ENCODE measurements at regions of chr20 and their contacts with region 1.

Region 1: DNA sequence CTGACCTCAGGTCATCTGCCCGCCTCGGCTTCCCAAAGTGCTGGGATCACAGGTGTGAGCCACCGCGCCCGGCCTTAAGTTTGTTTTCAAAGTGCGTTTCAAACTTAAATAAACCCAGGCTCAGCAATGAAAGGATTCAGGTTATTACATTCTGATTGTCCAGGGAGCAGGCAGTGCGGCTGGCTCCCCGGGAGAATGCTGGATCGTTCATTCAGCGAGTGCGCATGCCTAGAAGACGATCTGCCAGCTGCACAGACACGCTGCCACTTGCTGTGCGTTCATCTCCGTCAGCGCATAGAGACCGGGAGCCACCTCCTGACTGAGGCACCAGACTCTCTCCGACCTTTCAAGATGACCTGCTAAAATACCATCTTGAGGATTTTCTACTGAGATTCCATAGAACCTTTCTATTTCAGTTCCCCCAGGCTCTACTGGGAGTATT is 163.9 kb upstream of the ZNF217 start:
- DNase-seq: peak in 1 of 2 experiments; percentile 10
- H3K4me3 ChIP-seq: no peak overlapping the region
- H3K27ac ChIP-seq: no peak overlapping the region
- H3K4me1 ChIP-seq: peaks cover 22% of the 10 kb centered on the region
- H3K27me3 ChIP-seq: no peaks in the 10 kb centered on the region
- CTCF ChIP-seq: no peak

Region 2: GRCh38 chr20:53328961-53329360 is 428.5 kb before region 1 on chr20:
- CTCF ChIA-PET with region 1: interaction called, 18 read pairs
- POLR2A ChIA-PET with region 1: no interaction called
- intact Hi-C with region 1: no loop called
- DNase-seq: no peak
- H3K4me3 ChIP-seq: no peak overlapping the region
- H3K27ac ChIP-seq: no peak overlapping the region
- H3K4me1 ChIP-seq: no peaks in the 10 kb centered on the region
- H3K27me3 ChIP-seq: peaks cover 84% of the 10 kb centered on the region
- CTCF ChIP-seq: no peak

Region 3: DNA sequence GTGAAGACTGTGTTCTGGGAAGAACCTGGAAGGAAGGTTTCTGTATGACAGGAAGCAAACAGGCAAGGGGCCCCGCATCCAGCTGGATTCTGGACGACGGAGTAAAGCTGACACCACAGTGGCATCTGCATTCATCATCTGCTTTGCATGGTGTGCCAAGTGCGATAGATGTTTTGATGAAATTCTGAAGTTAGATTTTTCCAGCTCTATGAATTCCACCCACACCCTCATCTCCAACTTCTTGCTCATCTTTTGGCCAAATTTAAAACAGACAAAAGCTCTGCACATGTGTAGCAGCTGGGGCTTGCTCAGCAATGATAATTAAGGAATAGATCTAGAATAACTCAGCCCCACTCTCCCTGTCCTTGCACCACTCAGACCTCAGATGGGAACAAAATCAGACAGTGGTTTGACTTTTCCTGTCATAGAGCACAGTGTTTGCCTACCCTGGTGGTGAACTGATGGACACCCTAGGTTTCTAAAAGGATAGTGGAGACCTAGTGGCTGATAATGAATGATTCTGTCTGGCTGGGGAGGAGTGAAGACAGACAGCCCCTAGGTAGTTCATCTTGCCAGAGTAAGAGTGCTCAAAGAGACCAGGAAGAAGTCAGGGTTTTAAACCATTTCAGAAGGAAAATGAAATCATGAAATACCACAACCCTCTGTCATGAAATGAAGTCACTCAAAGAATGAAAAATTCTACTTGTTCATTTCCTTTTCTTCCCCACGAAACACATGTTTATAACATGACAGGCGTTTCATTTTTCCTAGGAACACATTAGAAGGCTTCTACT is 227.1 kb after region 1 on chr20:
- CTCF ChIA-PET with region 1: no interaction called
- POLR2A ChIA-PET with region 1: no interaction called
- intact Hi-C with region 1: no loop called
- DNase-seq: peak in 1 of 2 experiments; percentile 30
- H3K4me3 ChIP-seq: no peak overlapping the region
- H3K27ac ChIP-seq: no peak overlapping the region
- H3K4me1 ChIP-seq: no peaks in the 10 kb centered on the region
- H3K27me3 ChIP-seq: no peaks in the 10 kb centered on the region
- CTCF ChIP-seq: no peak